A673 (cell line): ENCODE measurements at regions of chr4 and their contacts with region 1.

Region 1: GRCh38 chr4:139177868-139178611 is 1.0 kb upstream of the ELF2 start:
- DNase-seq: peak; percentile 98
- H3K4me3 ChIP-seq: peak overlapping the region; percentile 98
- H3K27ac ChIP-seq: peak overlapping the region; percentile 92
- H3K4me1 ChIP-seq: peaks cover 21% of the 10 kb centered on the region
- H3K27me3 ChIP-seq: no peaks in the 10 kb centered on the region
- CTCF ChIP-seq: no peak

Region 2: GRCh38 chr4:139030614-139031235 is 147.3 kb before region 1 on chr4:
- CTCF ChIA-PET with region 1: interaction called, 4 read pairs
- POLR2A ChIA-PET with region 1: no interaction called
- intact Hi-C with region 1: loop called (anchors 5 kb)
- DNase-seq: peak; percentile 86
- H3K4me3 ChIP-seq: no peak overlapping the region
- H3K27ac ChIP-seq: no peak overlapping the region
- H3K4me1 ChIP-seq: peaks cover 3% of the 10 kb centered on the region
- H3K27me3 ChIP-seq: no peaks in the 10 kb centered on the region
- CTCF ChIP-seq: peak; percentile 91

Region 3: DNA sequence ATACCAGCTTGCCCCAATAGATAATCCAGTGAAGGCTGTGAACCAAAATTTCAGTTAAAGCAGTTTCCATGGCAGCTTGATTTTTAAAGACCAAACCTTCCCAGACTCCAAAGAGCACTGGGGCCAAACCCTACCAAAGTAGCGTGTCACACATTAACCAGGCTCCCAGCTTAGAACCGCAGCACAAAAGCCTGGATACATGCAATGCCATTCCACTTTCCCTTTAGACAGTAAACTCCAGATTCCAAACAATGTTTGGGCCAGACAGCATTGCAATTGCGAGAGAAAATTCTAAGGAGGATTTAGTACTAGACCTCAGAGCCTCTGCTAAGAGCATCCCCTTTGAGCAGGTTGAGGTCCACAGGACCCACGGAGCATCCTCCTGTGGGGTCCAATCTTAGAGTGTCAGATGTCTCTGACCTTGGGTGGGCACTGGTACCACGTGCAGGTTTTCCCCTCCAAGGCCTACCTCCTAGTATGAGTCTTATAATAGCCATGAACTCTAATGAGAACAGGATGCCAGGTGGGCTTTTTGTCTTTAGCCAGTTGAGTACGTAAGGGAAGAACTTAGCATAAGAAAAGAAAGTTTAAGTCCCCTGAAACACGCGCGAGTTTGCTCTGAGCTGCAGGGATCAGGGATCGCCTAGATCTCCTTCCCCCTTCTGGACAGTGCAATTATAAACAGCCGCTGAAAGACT is 63.2 kb after region 1 on chr4:
- CTCF ChIA-PET with region 1: no interaction called
- POLR2A ChIA-PET with region 1: no interaction called
- intact Hi-C with region 1: no loop called
- DNase-seq: no peak
- H3K4me3 ChIP-seq: no peak overlapping the region
- H3K27ac ChIP-seq: no peak overlapping the region
- H3K4me1 ChIP-seq: no peaks in the 10 kb centered on the region
- H3K27me3 ChIP-seq: no peaks in the 10 kb centered on the region
- CTCF ChIP-seq: no peak

Region 4: GRCh38 chr4:139301113-139301820 is 123.2 kb after region 1 on chr4 and contains the start of gene NAA15:
- CTCF ChIA-PET with region 1: no interaction called
- POLR2A ChIA-PET with region 1: no interaction called
- intact Hi-C with region 1: loop called (anchors 2 kb)
- DNase-seq: peak; percentile 100
- H3K4me3 ChIP-seq: peak within 1 kb of the TSS; percentile 93
- H3K27ac ChIP-seq: peak within 1 kb of the TSS; percentile 95
- H3K4me1 ChIP-seq: peaks cover 15% of the 10 kb centered on the region
- H3K27me3 ChIP-seq: no peaks in the 10 kb centered on the region
- CTCF ChIP-seq: no peak
- total RNA-seq, gene NAA15: 105 and 123 TPM in 2 replicates

Region 5: DNA sequence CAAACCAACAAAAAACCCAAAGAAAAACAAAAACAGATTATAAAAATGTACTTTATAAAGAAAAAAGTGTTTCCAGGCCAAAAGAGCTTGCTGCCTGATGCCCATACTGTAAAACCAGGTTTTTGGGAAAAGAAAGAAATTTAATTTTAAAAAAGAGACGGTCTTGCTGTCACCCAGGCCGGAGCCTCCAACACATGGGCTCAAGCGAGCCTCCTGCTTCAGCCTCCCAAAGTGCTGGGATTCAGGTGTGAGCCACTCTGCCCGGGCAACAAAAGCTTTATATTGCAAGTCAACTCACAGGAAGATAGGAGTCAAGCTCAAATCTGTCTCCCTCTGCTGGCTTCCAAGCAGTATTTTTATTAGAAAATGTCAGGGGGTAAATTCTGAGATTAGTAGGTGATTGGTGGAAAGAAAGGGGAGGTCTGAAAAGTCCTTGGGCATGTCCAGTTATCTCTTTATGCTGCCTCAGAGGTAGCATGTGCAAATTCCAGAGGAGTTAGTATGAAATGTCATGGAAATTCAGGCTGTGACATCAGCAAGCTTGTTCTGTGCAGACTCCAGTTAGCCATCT is 527.0 kb after region 1 on chr4:
- CTCF ChIA-PET with region 1: no interaction called
- POLR2A ChIA-PET with region 1: no interaction called
- intact Hi-C with region 1: no loop called
- DNase-seq: peak; percentile 23
- H3K4me3 ChIP-seq: no peak overlapping the region
- H3K27ac ChIP-seq: no peak overlapping the region
- H3K4me1 ChIP-seq: no peaks in the 10 kb centered on the region
- H3K27me3 ChIP-seq: no peaks in the 10 kb centered on the region
- CTCF ChIP-seq: peak; percentile 47